Right lobe of liver (tissue), 6 donors: ENCODE measurements at regions of chr7 and their contacts with region 1.

Region 1: GRCh38 chr7:96075510-96076349 is 246.2 kb downstream of the SLC25A13 start:
- DNase-seq: peak; percentile 68 to 73 (median 69)
- ATAC-seq: peak; percentile 98 to 99 (median 98)
- H3K4me3 ChIP-seq: peak overlapping the region; percentile 44 to 61 (median 55)
- H3K27ac ChIP-seq: no peak overlapping the region
- H3K4me1 ChIP-seq: peaks cover 0 to 3% (median 2%) of the 10 kb centered on the region in 4 donors
- H3K27me3 ChIP-seq: no peaks in the 10 kb centered on the region
- CTCF ChIP-seq: peak; percentile 74 to 89 (median 80)
- POLR2A ChIP-seq: no peak

Region 2: GRCh38 chr7:95781961-95782586 is 293.7 kb before region 1 on chr7:
- intact Hi-C with region 1: no loop called
- DNase-seq: no peak
- ATAC-seq: no peak
- H3K4me3 ChIP-seq: no peak overlapping the region
- H3K27ac ChIP-seq: no peak overlapping the region
- H3K4me1 ChIP-seq: no peaks in the 10 kb centered on the region
- H3K27me3 ChIP-seq: no peaks in the 10 kb centered on the region
- CTCF ChIP-seq: no peak
- POLR2A ChIP-seq: no peak

Region 3: DNA sequence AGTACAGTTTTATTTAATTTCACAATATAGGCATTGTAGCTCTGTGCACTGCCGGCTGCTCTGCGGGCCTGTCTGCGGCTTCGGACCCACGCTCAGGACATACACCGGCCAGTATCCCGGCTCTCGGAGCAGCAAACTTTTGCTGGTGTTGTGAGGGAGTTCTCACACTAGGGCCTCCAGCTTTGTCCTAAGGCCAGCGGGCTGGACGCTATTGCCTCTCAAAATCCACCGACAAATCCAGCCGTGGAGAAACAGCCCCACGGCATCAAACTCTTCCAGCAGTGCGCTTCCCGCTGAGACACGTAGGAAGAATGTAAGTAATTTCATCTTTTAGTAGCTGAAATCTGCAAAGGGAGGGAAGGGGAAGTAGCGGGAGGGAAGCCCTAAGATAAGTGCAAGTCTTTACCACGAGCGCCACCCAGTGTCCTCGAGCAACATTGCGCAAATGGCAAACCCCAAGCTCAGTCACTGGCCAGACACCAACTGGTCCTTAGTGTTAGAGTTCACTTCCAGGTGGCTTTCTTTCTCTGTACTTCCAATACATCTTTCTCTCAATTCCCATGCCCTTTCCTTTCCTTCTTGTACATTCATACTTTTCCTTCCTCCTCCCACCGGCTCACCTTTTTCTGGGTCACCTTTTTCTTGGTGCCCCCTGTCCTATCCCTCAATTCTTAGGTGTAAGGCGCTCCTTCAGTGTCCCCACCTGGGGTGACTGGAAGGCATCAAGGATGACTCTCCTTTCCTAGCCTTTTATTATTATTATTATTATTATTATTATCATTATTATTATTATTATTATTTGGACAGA is 951.9 kb after region 1 on chr7:
- intact Hi-C with region 1: loop called (anchors 5 to 10 kb)
- DNase-seq: peak; percentile 73 to 83 (median 78)
- ATAC-seq: peak; percentile 95 to 99 (median 96)
- H3K4me3 ChIP-seq: peak overlapping the region in 2 of 3 donors; percentile 31 to 43
- H3K27ac ChIP-seq: no peak overlapping the region
- H3K4me1 ChIP-seq: peaks cover 0 to 15% (median 0%) of the 10 kb centered on the region in 4 donors
- H3K27me3 ChIP-seq: peaks cover 4 to 15% of the 10 kb centered on the region in 2 donors
- CTCF ChIP-seq: peak; percentile 84 to 89 (median 86)
- POLR2A ChIP-seq: no peak